Activated CD4-positive, alpha-beta T cell treated with anti-CD3 and anti-CD28 coated beads, Interleukin-2, amount 10 ng/mL, durations not matched to agents 24 days and 14 days (primary cell): ENCODE measurements at regions of chr7 and their contacts with region 1.

Region 1: GRCh38 chr7:15015545-15016326 is 113.2 kb upstream of the DGKB start:
- DNase-seq: peak; percentile 59
- H3K4me3 Mint-ChIP-seq: no peak overlapping the region
- H3K27ac Mint-ChIP-seq: no peak overlapping the region
- H3K4me1 Mint-ChIP-seq: no peaks in the 10 kb centered on the region
- H3K27me3 Mint-ChIP-seq: no peaks in the 10 kb centered on the region

Region 2: GRCh38 chr7:14717816-14718215 is 297.9 kb before region 1 on chr7:
- intact Hi-C with region 1: loop called (anchors 10 kb)
- DNase-seq: no peak
- H3K4me3 Mint-ChIP-seq: no peak overlapping the region
- H3K27ac Mint-ChIP-seq: no peak overlapping the region
- H3K4me1 Mint-ChIP-seq: no peaks in the 10 kb centered on the region
- H3K27me3 Mint-ChIP-seq: no peaks in the 10 kb centered on the region

Region 3: GRCh38 chr7:14999331-14999730 is 16.4 kb before region 1 on chr7:
- intact Hi-C with region 1: no loop called
- DNase-seq: no peak
- H3K4me3 Mint-ChIP-seq: no peak overlapping the region
- H3K27ac Mint-ChIP-seq: no peak overlapping the region
- H3K4me1 Mint-ChIP-seq: no peaks in the 10 kb centered on the region
- H3K27me3 Mint-ChIP-seq: no peaks in the 10 kb centered on the region